Sigmoid colon (tissue), 7 donors: ENCODE measurements at regions of chr7 and their contacts with region 1.

Region 1: GRCh38 chr7:136874238-136875032 is 6.0 kb downstream of the CHRM2 start:
- DNase-seq: no peak
- H3K4me3 ChIP-seq: no peak overlapping the region
- H3K27ac ChIP-seq: peak overlapping the region in 3 of 4 donors; percentile 90 to 91 (median 91)
- H3K4me1 ChIP-seq: peaks cover 0 to 74% (median 42%) of the 10 kb centered on the region in 4 donors
- H3K27me3 ChIP-seq: no peaks in the 10 kb centered on the region
- CTCF ChIP-seq: peak in 1 of 4 experiments; percentile 33
- EP300 ChIP-seq: no peak
- POLR2A ChIP-seq: no peak

Region 2: GRCh38 chr7:136142583-136142982 is 731.9 kb before region 1 on chr7:
- intact Hi-C with region 1: loop called (anchors 10 kb)
- DNase-seq: no peak
- H3K4me3 ChIP-seq: no peak overlapping the region
- H3K27ac ChIP-seq: peak overlapping the region in 3 of 4 donors; percentile 14 to 64 (median 60)
- H3K4me1 ChIP-seq: peaks cover 2 to 66% (median 26%) of the 10 kb centered on the region in 4 donors
- H3K27me3 ChIP-seq: no peaks in the 10 kb centered on the region
- CTCF ChIP-seq: no peak
- EP300 ChIP-seq: peak in 3 of 4 donors; percentile 28 to 78 (median 67)
- POLR2A ChIP-seq: no peak

Region 3: GRCh38 chr7:137006293-137006692 is 131.9 kb after region 1 on chr7:
- intact Hi-C with region 1: loop called (anchors 5 kb)
- DNase-seq: no peak
- H3K4me3 ChIP-seq: peak overlapping the region in 1 of 4 donors; percentile 3
- H3K27ac ChIP-seq: peak overlapping the region; percentile 59 to 76 (median 69)
- H3K4me1 ChIP-seq: peaks cover 0 to 51% (median 35%) of the 10 kb centered on the region in 4 donors
- H3K27me3 ChIP-seq: no peaks in the 10 kb centered on the region
- CTCF ChIP-seq: no peak
- EP300 ChIP-seq: no peak
- POLR2A ChIP-seq: no peak

Region 4: DNA sequence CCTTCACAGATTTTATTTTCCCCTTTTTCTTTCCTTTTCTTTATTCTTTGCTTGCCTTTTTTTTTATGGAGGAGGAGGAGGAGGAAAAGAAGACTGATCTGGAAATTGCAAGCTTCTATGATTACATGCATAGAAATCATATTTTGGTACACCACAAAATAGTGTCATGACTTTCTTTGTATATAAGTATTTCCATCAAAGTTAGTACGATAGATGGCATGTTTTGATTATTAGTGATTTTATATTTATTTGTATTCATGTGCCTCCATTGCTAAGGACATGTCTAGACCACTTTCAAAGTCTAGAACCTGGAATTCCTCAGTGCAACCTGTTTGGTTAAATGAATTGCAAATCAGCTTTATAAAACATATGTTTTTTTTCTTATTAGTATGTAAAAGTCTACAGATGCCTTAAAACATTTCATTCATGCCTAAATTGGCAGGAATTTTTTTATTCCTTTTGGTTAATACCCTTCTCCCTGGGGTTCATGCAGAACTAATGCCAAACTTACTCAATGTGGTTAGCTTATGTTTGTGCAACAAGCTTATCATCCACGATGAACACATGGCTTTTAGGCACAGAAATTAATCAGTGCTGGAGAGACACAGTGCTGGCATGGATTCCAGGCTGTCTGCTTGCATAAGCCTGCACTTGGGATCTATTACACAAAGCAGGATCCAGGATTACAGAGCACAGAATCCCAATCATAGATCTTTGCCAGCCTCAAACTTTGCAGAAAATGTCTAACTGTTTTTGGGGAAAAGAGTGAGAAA is 207.1 kb after region 1 on chr7:
- intact Hi-C with region 1: loop called (anchors 5 kb)
- DNase-seq: peak; percentile 91
- H3K4me3 ChIP-seq: no peak overlapping the region
- H3K27ac ChIP-seq: peak overlapping the region in 3 of 4 donors; percentile 40 to 71 (median 70)
- H3K4me1 ChIP-seq: peaks cover 0 to 54% (median 47%) of the 10 kb centered on the region in 4 donors
- H3K27me3 ChIP-seq: no peaks in the 10 kb centered on the region
- CTCF ChIP-seq: no peak
- EP300 ChIP-seq: peak in 2 of 4 donors; percentile 0 to 54
- POLR2A ChIP-seq: no peak

Region 5: GRCh38 chr7:137146012-137146455 is 271.6 kb after region 1 on chr7:
- intact Hi-C with region 1: loop called (anchors 5 kb)
- DNase-seq: no peak
- H3K4me3 ChIP-seq: peak overlapping the region in 1 of 4 donors; percentile 15
- H3K27ac ChIP-seq: peak overlapping the region; percentile 53 to 79 (median 71)
- H3K4me1 ChIP-seq: peaks cover 0 to 53% (median 32%) of the 10 kb centered on the region in 4 donors
- H3K27me3 ChIP-seq: no peaks in the 10 kb centered on the region
- CTCF ChIP-seq: no peak
- EP300 ChIP-seq: peak in 1 of 4 donors; percentile 28
- POLR2A ChIP-seq: no peak

Region 6: DNA sequence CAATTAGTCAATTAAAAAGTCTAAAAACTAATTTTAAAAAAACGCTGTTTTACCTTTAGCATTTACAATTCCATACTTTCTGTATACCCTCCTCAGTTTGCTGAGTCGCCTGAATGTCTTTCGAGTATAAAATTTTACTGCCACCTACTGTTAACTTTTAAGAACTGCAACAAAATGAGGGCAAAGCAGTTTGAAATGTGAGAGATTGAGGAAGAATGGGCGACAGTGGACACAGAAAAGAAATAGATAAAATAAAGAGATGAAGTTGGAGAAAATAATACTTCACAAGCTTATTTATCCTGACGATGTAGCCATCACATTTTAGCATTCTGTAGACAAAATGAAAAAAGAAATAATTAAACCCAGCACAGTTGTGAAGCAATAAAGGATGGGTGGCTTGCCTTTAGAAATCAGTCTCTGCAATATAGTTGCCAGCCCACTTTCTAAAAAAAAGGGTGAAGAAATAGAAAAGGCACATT is 579.9 kb after region 1 on chr7:
- intact Hi-C with region 1: loop called (anchors 10 kb)
- DNase-seq: no peak
- H3K4me3 ChIP-seq: peak overlapping the region in 2 of 4 donors; percentile 6 to 11
- H3K27ac ChIP-seq: peak overlapping the region; percentile 53 to 74 (median 70)
- H3K4me1 ChIP-seq: peaks cover 0 to 20% (median 6%) of the 10 kb centered on the region in 4 donors
- H3K27me3 ChIP-seq: no peaks in the 10 kb centered on the region
- CTCF ChIP-seq: peak; percentile 63 to 69 (median 66)
- EP300 ChIP-seq: no peak
- POLR2A ChIP-seq: no peak